ENCODE measurements at regions of chr14 and their contacts with region 1.

Region 1: GRCh38 chr14:94897082-94897481 is 127.2 kb upstream of the GSC start:
- DNase-seq: no peak
- H3K27ac ChIP-seq: no peak overlapping the region
- CTCF ChIP-seq: no peak

Region 2: DNA sequence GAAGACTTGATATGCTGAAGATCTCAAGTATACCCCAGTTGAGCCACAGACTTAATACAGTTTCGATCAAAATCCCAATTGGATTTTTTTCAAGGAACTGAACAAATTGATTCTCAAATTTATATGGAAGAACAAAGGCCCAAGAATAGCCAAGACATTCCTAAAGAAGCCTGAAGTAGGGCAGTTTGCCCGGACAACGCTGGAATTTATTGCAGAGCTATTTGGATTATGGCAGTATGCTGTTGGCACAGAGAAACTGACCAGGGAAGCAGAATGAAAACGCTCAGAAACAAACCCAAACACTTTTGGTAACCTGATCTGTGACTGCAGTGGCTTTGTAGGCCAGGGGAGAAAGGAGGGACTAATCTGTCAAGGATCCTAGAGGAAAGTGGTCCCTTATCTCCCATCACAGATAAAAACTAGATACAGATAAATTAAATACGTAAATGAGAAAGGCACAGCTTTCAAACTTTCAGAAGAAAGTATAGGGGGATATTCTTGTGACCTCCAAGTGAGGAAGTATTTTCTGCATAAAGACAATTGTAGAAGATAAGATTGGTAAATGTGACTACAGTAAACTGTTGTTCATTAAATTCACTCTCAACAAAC is 91.3 kb before region 1 on chr14:
- CTCF ChIA-PET with region 1: no interaction called
- POLR2A ChIA-PET with region 1: no interaction called
- DNase-seq: no peak
- H3K27ac ChIP-seq: no peak overlapping the region
- CTCF ChIP-seq: no peak

Region 3: GRCh38 chr14:94850310-94851211 is 46.5 kb before region 1 on chr14:
- CTCF ChIA-PET with region 1: no interaction called
- POLR2A ChIA-PET with region 1: no interaction called
- DNase-seq: peak; percentile 28
- H3K27ac ChIP-seq: peak overlapping the region; percentile 87
- CTCF ChIP-seq: no peak

Region 4: DNA sequence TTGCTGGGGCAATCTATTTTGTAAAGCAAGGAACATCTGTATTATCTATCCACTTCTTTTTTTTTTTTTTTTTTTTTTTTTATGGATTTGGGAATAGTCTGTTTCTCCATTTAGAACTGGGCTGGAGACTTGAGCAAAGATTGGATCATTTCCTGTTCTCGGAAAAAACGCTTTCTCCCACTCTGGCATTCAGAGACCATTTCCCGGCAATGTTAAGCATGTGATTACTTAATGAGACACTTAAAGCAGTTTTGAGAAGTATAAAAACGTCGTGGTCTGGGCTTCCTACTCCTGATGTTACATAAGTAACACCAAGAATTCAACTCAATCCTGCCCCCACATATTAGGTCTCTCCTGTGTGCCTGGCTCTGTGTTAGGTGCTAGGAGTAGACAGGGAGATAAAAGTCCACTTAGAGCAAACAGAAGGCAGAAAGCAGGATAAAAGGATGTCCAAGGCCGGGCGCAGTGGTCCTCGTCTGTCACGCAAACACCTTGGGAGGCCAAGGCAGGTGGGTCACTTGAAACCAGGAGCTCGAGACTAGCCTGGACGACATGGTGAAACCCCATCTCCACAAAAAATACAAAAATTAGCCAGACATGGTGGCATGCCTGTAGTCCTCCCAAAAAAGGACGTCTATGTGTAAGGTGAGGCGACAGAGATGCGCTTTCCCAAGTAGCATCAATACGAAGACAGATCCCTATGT is 25.0 kb after region 1 on chr14:
- CTCF ChIA-PET with region 1: no interaction called
- POLR2A ChIA-PET with region 1: no interaction called
- DNase-seq: no peak
- H3K27ac ChIP-seq: no peak overlapping the region
- CTCF ChIP-seq: no peak

Region 5: DNA sequence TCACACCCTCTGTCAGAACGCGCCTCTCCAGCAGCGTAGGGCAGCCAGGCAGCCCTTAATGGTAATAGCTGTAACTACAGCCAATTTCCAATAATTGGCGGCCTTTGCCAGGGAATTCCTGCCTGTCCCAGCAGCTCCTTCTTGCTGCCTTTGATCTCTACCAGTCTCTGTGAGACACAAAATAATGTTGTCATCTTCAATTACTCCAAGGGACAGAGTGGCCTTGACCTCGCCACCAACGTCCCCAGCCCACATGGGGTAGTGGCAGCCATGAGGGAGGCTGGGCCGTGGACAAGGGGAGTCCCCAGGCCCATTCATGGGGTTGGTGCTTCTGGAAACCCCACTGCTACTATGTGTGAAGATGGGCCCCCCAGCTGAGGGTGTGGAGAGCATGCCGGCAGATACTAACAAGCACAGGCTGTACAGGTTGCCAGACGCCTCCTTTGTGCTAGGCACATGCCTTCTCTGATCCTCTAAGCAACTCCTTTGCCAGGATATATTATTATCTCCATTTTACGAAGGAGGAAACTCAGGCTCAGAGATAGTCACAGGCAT is 440.0 kb after region 1 on chr14:
- CTCF ChIA-PET with region 1: interaction called, 12 read pairs
- POLR2A ChIA-PET with region 1: no interaction called
- DNase-seq: no peak
- H3K27ac ChIP-seq: no peak overlapping the region
- CTCF ChIP-seq: no peak

Measured in RWPE1 (cell line).